Transverse colon (tissue), 4 donors: ENCODE measurements at regions of chr9 and their contacts with region 1.

Region 1: GRCh38 chr9:24090566-24090965 is 264.5 kb upstream of the ELAVL2 start:
- DNase-seq: no peak
- H3K4me3 ChIP-seq: no peak overlapping the region
- H3K27ac ChIP-seq: no peak overlapping the region
- H3K4me1 ChIP-seq: no peaks in the 10 kb centered on the region
- H3K27me3 ChIP-seq: no peaks in the 10 kb centered on the region
- CTCF ChIP-seq: no peak
- EP300 ChIP-seq: no peak
- POLR2A ChIP-seq: no peak

Region 2: DNA sequence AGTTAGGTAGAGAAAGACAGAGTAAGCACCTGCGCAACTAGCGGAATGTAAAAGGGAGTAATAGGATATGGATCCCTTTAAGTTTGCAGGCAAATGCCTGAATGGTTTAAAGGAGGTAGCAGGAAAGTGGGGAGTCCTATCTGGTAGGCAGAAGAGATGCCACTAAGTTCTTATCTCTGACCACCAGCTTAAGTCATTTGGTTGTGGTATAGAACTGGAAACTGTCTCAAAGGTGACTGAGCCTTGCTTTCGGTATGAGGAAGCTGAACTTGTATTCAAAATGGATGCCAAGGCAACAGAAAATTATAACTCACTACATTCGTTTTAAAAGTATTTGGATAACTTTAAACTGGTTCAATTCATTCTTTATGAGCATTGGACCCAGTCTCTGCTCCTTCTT is 1168.3 kb before region 1 on chr9:
- in situ Hi-C with region 1: no loop called
- intact Hi-C with region 1: no loop called
- DNase-seq: no peak
- H3K4me3 ChIP-seq: no peak overlapping the region
- H3K27ac ChIP-seq: no peak overlapping the region
- H3K4me1 ChIP-seq: no peaks in the 10 kb centered on the region
- H3K27me3 ChIP-seq: no peaks in the 10 kb centered on the region
- CTCF ChIP-seq: no peak
- EP300 ChIP-seq: no peak
- POLR2A ChIP-seq: no peak

Region 3: DNA sequence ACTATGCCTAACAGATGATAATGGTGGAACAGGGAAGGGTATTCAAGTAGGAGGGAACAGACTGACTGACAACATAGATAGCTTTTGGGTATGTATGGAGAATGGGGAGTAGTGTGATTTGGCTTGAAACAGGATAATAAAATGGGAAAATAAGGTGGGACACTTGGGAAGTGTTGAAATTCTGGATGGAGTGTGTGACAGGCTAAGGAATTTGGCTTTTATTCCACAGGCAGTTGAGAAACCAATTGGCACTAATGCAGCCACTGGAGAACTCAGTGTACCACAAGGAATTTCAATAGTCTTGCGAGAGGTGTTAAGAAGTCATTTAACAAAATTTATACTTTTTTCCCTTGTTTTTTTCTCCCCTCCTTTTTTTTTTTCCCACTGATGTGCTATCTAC is 111.1 kb before region 1 on chr9:
- in situ Hi-C with region 1: loop called in 1 of 4 experiments (anchors 25 kb)
- intact Hi-C with region 1: no loop called
- DNase-seq: no peak
- H3K4me3 ChIP-seq: no peak overlapping the region
- H3K27ac ChIP-seq: no peak overlapping the region
- H3K4me1 ChIP-seq: no peaks in the 10 kb centered on the region
- H3K27me3 ChIP-seq: no peaks in the 10 kb centered on the region
- CTCF ChIP-seq: no peak
- EP300 ChIP-seq: no peak
- POLR2A ChIP-seq: no peak